A549 (cell line): ENCODE measurements at regions of chr6 and their contacts with region 1.

Region 1: GRCh38 chr6:125956506-125957390 is at the start of gene HINT3:
- DNase-seq: peak; percentile 78 to 97
- ATAC-seq: peak; percentile 85 to 89
- H3K4me3 ChIP-seq: peak within 1 kb of the TSS; percentile 86
- H3K27ac ChIP-seq: peak within 1 kb of the TSS; percentile 95 to 96
- H3K4me1 ChIP-seq: peaks cover 22% of the 10 kb centered on the region; the same call in 2 of the 3 replicates
- CTCF ChIP-seq: peak; percentile 82
- EP300 ChIP-seq: no peak
- POLR2A ChIP-seq: no peak; the same call in 1 of the 2 replicates
- RAD21 ChIP-seq: peak; percentile 67 to 85
- polyA plus RNA-seq, gene HINT3: 4.7 and 7.2 TPM in 2 replicates

Region 2: GRCh38 chr6:125790358-125791150 is 166.2 kb before region 1 on chr6 and contains the start of gene NCOA7:
- CTCF ChIA-PET with region 1: interaction called, 24 read pairs
- POLR2A ChIA-PET with region 1: interaction called, 15 read pairs
- DNase-seq: peak; percentile 50 to 72
- ATAC-seq: peak; percentile 85 to 87
- H3K4me3 ChIP-seq: peak within 1 kb of the TSS; percentile 81
- H3K27ac ChIP-seq: peak within 1 kb of the TSS; percentile 91 to 97
- H3K4me1 ChIP-seq: peaks cover 53% of the 10 kb centered on the region
- CTCF ChIP-seq: no peak
- EP300 ChIP-seq: no peak
- POLR2A ChIP-seq: peak; percentile 55
- RAD21 ChIP-seq: no peak
- polyA plus RNA-seq, gene NCOA7: 154 and 195 TPM in 2 replicates

Region 3: DNA sequence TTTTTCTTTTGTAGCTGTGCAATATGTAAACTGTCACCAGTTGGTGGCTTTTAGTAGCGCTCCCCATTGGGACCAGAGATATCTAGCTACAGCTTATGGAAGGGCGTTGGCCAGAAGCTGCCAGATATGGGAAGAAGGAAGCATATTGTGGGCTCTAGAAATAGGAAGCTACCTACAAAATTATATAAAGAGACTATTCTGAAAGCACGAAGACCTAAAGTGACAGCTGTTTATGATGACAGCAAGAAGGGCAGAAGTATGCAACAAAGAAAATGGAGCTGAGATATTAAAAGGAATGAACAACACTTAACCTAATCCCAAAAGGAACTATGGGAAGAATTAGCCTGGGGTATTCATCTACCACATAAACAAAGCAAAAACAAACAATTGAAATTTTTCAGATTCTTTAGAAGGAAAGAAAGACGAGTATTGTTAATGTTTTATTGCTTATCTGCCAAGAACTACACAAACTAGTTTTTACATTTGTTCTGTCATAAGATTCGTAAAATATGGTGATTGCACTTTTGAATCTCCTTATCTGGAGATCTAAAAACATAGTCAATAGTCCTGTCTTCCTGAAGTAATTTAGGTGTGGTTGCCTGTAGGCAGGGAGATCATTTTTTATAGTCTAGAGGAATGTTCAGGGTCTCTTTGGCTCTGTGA is 84.4 kb before region 1 on chr6:
- CTCF ChIA-PET with region 1: interaction called, 14 read pairs
- POLR2A ChIA-PET with region 1: no interaction called
- DNase-seq: peak; percentile 8 to 60
- ATAC-seq: peak; percentile 47 to 76; a peak in 4 of 6 replicates
- H3K4me3 ChIP-seq: no peak overlapping the region
- H3K27ac ChIP-seq: peak overlapping the region; percentile 65
- H3K4me1 ChIP-seq: peaks cover 49% of the 10 kb centered on the region
- CTCF ChIP-seq: no peak
- EP300 ChIP-seq: no peak
- POLR2A ChIP-seq: no peak
- RAD21 ChIP-seq: no peak

Region 4: DNA sequence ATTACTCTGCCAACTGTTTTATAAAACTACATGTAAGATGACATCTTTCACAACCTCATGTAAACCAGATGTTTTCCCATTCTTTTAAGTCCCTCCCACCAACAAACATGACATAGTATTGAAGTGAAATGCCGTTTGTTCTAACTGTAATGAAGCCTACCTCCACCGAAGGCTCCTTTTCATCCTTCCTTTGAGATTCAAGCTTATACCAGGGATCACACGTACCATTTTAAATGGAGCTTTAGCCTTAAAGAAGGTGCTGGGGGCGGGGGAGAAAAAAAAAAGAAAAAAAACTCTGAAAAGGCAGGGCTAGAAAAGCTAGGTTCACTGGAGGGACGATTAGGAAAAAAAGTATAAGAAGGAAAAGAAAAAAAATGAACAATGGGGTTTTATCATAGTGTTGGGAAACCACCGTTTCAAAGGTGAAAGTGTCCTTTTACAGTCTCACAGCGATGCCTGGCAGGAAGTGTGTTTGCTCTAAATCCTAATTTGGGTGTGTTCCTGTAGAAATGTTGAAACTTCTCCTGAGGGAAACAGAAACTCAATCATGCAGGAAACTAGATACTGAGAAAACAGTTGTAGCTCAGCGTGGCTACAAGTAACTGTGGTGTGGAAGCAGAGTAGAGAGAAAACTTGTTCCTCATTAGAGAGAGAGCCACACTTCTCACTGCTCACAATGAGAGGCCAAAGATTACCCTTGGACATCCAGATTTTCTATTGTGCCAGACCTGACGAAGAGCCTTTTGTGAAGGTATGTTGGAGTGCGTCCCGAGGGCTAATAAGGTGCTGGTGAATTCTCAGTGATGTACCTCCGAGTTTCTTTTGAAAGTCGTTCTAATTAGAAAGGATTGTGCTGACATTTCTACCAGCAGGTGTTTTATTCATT is 37.8 kb before region 1 on chr6:
- CTCF ChIA-PET with region 1: interaction called, 148 read pairs
- POLR2A ChIA-PET with region 1: no interaction called
- DNase-seq: peak; percentile 25 to 92
- ATAC-seq: peak; percentile 78 to 79
- H3K4me3 ChIP-seq: peak overlapping the region; percentile 66
- H3K27ac ChIP-seq: peak overlapping the region; percentile 88 to 91
- H3K4me1 ChIP-seq: peaks cover 73% of the 10 kb centered on the region
- CTCF ChIP-seq: no peak
- EP300 ChIP-seq: no peak; a peak in 1 of 5 replicates
- POLR2A ChIP-seq: 0 out of 2 replicates have a peak, but pooled peaks have one; percentile 8
- RAD21 ChIP-seq: no peak

Region 5: GRCh38 chr6:125968493-125968892 is 11.7 kb after region 1 on chr6:
- CTCF ChIA-PET with region 1: interaction called, 27 read pairs
- POLR2A ChIA-PET with region 1: no interaction called
- DNase-seq: no peak
- ATAC-seq: no peak
- H3K4me3 ChIP-seq: no peak overlapping the region
- H3K27ac ChIP-seq: no peak overlapping the region
- H3K4me1 ChIP-seq: peaks cover 6% of the 10 kb centered on the region; the same call in 2 of the 3 replicates
- CTCF ChIP-seq: no peak
- EP300 ChIP-seq: no peak
- POLR2A ChIP-seq: no peak
- RAD21 ChIP-seq: no peak